ENCODE measurements at regions of chr15 and their contacts with region 1.

Region 1: GRCh38 chr15:77419836-77420609 is at the start of gene PEAK1:
- DNase-seq: peak; percentile 94 to 98
- H3K4me3 ChIP-seq: peak within 1 kb of the TSS; percentile 92
- H3K27ac ChIP-seq: peak within 1 kb of the TSS; percentile 65
- H3K4me1 ChIP-seq: peaks cover 39% of the 10 kb centered on the region
- H3K27me3 ChIP-seq: no peaks in the 10 kb centered on the region
- CTCF ChIP-seq: no peak
- total RNA-seq, gene PEAK1: 20.6 and 20.7 TPM in 2 replicates

Region 2: GRCh38 chr15:76905013-76905839 is 514.8 kb before region 1 on chr15 and contains the start of gene SCAPER:
- CTCF ChIA-PET with region 1: no interaction called
- POLR2A ChIA-PET with region 1: no interaction called
- intact Hi-C with region 1: no loop called
- DNase-seq: peak; percentile 61 to 86
- H3K4me3 ChIP-seq: peak within 1 kb of the TSS; percentile 88
- H3K27ac ChIP-seq: no peak within 1 kb of the TSS
- H3K4me1 ChIP-seq: peaks cover 22% of the 10 kb centered on the region; the same call in 1 of the 2 replicates
- H3K27me3 ChIP-seq: no peaks in the 10 kb centered on the region
- CTCF ChIP-seq: no peak
- total RNA-seq, gene SCAPER: 18.7 and 22.0 TPM in 2 replicates

Region 3: DNA sequence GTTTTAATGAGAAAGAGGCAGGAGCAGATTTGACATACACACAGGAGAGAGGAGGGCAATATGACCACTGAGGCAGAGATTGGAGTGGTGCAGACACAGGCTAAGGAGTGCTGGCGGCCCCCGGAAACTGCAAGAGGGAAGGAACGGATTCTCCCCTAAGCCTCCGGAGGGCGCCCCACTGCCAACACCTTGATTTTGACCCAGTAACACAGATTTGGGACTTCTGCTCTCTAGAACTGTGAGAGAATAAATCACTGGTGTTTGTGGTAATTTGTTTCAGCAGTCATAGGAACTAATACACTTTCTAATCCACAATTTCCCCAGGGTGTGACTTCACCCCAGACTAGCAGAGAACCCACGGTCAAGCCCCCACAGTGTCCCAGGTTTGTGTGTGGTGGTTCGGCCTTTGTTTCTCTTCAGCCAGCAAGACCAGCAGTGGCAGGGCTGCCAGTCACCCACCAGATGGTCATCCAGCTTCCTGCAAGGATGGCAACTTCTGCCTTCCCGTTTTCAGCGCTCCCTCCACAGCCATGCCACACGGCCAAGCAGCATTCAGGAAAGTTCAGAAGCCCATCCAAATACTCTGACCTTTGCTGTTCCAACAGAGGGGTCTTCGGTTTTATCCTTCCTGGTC is 325.5 kb before region 1 on chr15:
- CTCF ChIA-PET with region 1: interaction called, 14 read pairs
- POLR2A ChIA-PET with region 1: no interaction called
- intact Hi-C with region 1: no loop called
- DNase-seq: no peak
- H3K4me3 ChIP-seq: no peak overlapping the region
- H3K27ac ChIP-seq: no peak overlapping the region
- H3K4me1 ChIP-seq: no peaks in the 10 kb centered on the region
- H3K27me3 ChIP-seq: no peaks in the 10 kb centered on the region
- CTCF ChIP-seq: 0 out of 2 replicates have a peak, but pooled peaks have one; percentile 30

Measured in PC-9 (cell line).